Ascending aorta (tissue), 2 donors: ENCODE measurements at regions of chr4 and their contacts with region 1.

Region 1: GRCh38 chr4:1346781-1347409 is at the start of gene UVSSA:
- DNase-seq: peak; percentile 100
- H3K4me3 ChIP-seq: peak within 1 kb of the TSS; percentile 90 to 97
- H3K27ac ChIP-seq: peak within 1 kb of the TSS; percentile 96 to 99
- H3K4me1 ChIP-seq: peaks cover 9 to 19% of the 10 kb centered on the region in 2 donors
- H3K27me3 ChIP-seq: no peaks in the 10 kb centered on the region
- CTCF ChIP-seq: no peak
- total RNA-seq, gene UVSSA: 56.9 TPM

Region 2: DNA sequence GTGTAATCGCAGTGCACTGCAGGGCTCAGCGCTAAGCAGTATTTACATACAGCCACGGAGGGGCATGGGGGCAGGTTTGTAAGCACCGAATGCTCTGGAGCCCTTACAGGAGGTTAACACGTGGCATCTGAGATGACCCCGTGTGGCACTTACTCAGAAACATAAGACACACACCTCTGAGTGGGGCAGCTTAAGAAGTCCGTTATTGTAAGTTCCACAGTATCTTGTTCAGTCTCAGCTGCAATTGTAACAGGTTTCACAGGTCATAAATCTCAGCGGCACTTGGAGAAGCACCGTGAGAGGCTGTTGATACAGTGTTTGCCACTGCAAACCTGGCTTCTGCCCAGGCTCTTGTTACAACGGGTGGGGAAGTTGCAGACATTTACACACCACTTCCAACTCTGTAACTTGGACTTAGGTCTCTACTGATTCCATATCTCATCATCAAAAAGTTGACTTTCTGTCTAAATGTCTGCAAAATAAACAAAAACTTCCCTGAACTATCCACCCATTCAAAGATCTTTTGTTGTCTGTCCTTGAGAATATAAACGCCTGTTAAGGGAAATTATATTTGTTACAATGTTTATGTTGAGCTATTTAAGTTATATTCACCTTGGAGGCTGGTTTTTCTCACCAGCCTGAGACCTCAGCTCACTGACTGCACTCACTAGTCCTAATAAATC is 531.3 kb before region 1 on chr4:
- intact Hi-C with region 1: no loop called
- DNase-seq: no peak
- H3K4me3 ChIP-seq: no peak overlapping the region
- H3K27ac ChIP-seq: no peak overlapping the region
- H3K4me1 ChIP-seq: no peaks in the 10 kb centered on the region
- H3K27me3 ChIP-seq: no peaks in the 10 kb centered on the region
- CTCF ChIP-seq: no peak

Region 3: GRCh38 chr4:1043658-1044468 is 303.0 kb before region 1 on chr4:
- intact Hi-C with region 1: loop called (anchors 10 kb)
- DNase-seq: peak; percentile 94 to 99
- H3K4me3 ChIP-seq: peak overlapping the region; percentile 35 to 56
- H3K27ac ChIP-seq: peak overlapping the region; percentile 80 to 95
- H3K4me1 ChIP-seq: peaks cover 38 to 73% of the 10 kb centered on the region in 2 donors
- H3K27me3 ChIP-seq: no peaks in the 10 kb centered on the region
- CTCF ChIP-seq: no peak

Region 4: GRCh38 chr4:1309261-1310010 is 37.5 kb before region 1 on chr4:
- intact Hi-C with region 1: loop called (anchors 1 kb)
- DNase-seq: peak; percentile 71 to 95
- H3K4me3 ChIP-seq: peak overlapping the region; percentile 40 to 60
- H3K27ac ChIP-seq: peak overlapping the region; percentile 74 to 76
- H3K4me1 ChIP-seq: peaks cover 5 to 23% of the 10 kb centered on the region in 2 donors
- H3K27me3 ChIP-seq: no peaks in the 10 kb centered on the region
- CTCF ChIP-seq: no peak

Region 5: DNA sequence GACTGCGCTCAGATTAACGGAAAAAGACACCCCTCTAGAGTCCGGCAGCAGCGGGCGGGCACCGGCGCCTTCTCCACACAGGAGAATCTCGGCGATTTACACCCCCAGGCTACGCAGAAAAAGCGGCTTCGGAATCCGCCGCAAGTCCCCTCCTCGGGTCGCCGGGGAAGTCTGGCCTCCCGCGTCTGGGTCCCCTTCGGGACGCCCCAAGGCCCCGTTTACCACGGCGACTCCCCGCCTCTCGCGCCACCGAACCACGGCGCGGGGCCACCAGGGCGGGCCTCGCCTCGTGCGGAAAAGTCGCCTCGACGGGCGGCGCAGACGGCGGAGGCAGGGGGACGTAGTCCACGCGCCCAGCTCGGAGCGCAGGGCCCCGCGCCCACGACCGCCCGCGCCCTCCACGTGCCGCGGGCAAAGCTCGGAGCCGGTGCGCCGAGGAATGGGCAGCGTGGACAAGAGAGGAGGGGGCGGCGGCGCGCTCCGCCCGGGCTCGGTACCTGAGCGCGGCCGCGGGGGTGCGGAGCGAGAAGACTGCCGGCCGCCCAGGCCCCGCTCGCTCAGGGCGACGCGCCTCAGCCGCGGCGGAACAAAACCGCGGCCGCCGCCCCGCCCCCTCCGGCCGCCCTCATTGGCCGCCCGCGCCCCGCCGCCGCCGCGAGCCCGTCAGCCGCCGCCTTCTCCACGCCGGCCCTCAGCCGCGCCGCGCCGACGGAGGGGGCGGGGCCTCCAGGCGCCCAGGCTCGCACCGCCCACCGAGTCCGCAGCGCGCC is 337.0 kb after region 1 on chr4 and contains the start of gene FAM53A:
- intact Hi-C with region 1: loop called (anchors 1 kb)
- DNase-seq: peak in 1 of 2 donors; percentile 59
- H3K4me3 ChIP-seq: peak within 1 kb of the TSS; percentile 73 to 76
- H3K27ac ChIP-seq: peak within 1 kb of the TSS; percentile 64 to 85
- H3K4me1 ChIP-seq: peaks cover 0 to 7% of the 10 kb centered on the region in 2 donors
- H3K27me3 ChIP-seq: no peaks in the 10 kb centered on the region
- CTCF ChIP-seq: no peak
- total RNA-seq, gene FAM53A: not detected

Region 6: GRCh38 chr4:1870578-1871443 is 523.9 kb after region 1 on chr4 and contains the start of gene NSD2:
- intact Hi-C with region 1: loop called (anchors 5 kb)
- DNase-seq: peak; percentile 35 to 93
- H3K4me3 ChIP-seq: peak within 1 kb of the TSS; percentile 99 to 100
- H3K27ac ChIP-seq: peak within 1 kb of the TSS; percentile 98 to 99
- H3K4me1 ChIP-seq: peaks cover 4 to 5% of the 10 kb centered on the region in 2 donors
- H3K27me3 ChIP-seq: no peaks in the 10 kb centered on the region
- CTCF ChIP-seq: no peak
- total RNA-seq, gene NSD2: 19.9 TPM